ENCODE measurements at regions of chr20 and their contacts with region 1.

Region 1: DNA sequence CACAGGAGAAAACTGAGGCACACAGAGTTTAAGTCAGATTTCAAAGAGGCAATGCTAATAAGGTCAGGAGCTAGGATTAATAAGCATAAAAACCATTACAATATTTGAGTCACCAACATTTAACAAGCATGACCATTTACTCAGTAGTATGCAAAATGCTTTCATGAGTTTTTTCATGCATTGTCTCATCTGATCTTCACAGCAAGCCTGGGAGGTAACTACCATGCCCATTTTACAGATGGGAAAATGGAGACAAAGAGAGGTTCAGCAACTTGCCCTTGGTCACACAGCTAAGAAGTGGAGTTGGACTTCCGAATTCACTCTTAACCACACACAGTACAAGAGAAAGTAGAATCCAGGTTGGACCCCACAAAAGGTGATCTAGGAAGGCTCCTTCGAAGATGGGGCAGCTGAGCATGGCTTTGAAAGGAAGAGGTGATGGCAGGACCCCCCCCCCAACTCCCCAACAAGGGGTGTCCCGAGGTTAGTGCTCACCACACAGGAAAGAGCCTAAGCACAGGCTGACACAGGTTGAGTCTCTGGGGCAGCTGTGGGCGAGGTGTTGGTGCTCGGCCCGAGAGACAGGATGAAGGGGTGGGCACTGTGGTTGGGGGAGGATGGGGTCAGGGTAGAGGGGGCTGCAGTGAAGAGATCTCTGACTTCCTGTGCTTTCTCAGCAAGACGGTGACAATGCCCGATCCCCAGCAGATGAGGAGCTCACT is 108.8 kb downstream of the PREX1 start:
- DNase-seq: peak; percentile 29
- ATAC-seq: peak; percentile 58
- H3K4me3 ChIP-seq: no peak overlapping the region
- H3K27ac ChIP-seq: no peak overlapping the region
- H3K4me1 ChIP-seq: peaks cover 7% of the 10 kb centered on the region; the same call in 1 of the 2 replicates
- H3K27me3 ChIP-seq: no peaks in the 10 kb centered on the region
- CTCF ChIP-seq: no peak

Region 2: DNA sequence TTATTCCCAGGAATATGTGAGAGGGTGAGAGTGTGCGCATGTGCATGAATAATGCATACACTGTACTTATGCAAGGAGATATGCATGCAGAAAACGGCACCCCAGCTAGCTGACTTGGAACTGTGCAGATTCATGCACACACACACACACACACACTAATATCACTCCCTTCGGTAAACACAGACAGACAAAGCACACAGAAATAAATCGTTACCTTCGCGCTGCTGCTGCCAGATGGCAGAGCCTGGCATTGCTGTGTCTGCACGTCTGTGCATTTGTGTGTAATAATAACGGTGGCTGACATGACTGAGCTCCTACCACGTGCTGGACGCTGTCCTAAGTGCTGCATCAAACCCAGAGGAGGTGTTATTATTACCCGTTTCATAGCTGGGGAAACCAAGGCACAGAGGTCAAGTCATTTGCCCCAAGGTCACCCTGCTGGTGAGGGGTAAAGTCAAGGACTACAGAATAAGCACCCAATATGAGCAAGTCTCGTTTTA is 72.0 kb after region 1 on chr20:
- CTCF ChIA-PET with region 1: no interaction called
- POLR2A ChIA-PET with region 1: interaction called, 11 read pairs
- intact Hi-C with region 1: no loop called
- DNase-seq: peak; percentile 53
- ATAC-seq: peak; percentile 85
- H3K4me3 ChIP-seq: no peak overlapping the region
- H3K27ac ChIP-seq: no peak overlapping the region
- H3K4me1 ChIP-seq: peaks cover 17% of the 10 kb centered on the region
- H3K27me3 ChIP-seq: no peaks in the 10 kb centered on the region
- CTCF ChIP-seq: no peak

Region 3: GRCh38 chr20:48828022-48828743 is 109.2 kb after region 1 on chr20:
- CTCF ChIA-PET with region 1: no interaction called
- POLR2A ChIA-PET with region 1: no interaction called
- intact Hi-C with region 1: loop called (anchors 10 kb)
- DNase-seq: peak; percentile 90
- ATAC-seq: peak; percentile 58
- H3K4me3 ChIP-seq: peak overlapping the region; percentile 73
- H3K27ac ChIP-seq: no peak overlapping the region
- H3K4me1 ChIP-seq: peaks cover 63% of the 10 kb centered on the region
- H3K27me3 ChIP-seq: no peaks in the 10 kb centered on the region
- CTCF ChIP-seq: no peak